Prostate gland (tissue), 2 donors: ENCODE measurements at regions of chr2 and their contacts with region 1.

Region 1: GRCh38 chr2:152466980-152467676 is 132.2 kb downstream of the FMNL2 start:
- DNase-seq: peak; percentile 66
- H3K4me3 ChIP-seq: no peak overlapping the region
- H3K27ac ChIP-seq: peak overlapping the region; percentile 21 to 66
- H3K4me1 ChIP-seq: peaks cover 7% of the 10 kb centered on the region
- H3K27me3 ChIP-seq: no peaks in the 10 kb centered on the region
- CTCF ChIP-seq: no peak
- POLR2A ChIP-seq: peak; percentile 14

Region 2: GRCh38 chr2:152383702-152384101 is 83.4 kb before region 1 on chr2:
- intact Hi-C with region 1: no loop called
- DNase-seq: no peak
- H3K4me3 ChIP-seq: no peak overlapping the region
- H3K27ac ChIP-seq: no peak overlapping the region
- H3K4me1 ChIP-seq: no peaks in the 10 kb centered on the region
- H3K27me3 ChIP-seq: no peaks in the 10 kb centered on the region
- CTCF ChIP-seq: no peak
- POLR2A ChIP-seq: no peak

Region 3: GRCh38 chr2:152395103-152395502 is 72.0 kb before region 1 on chr2:
- intact Hi-C with region 1: loop called (anchors 5 kb)
- DNase-seq: no peak
- H3K4me3 ChIP-seq: no peak overlapping the region
- H3K27ac ChIP-seq: peak overlapping the region in 1 of 2 donors; percentile 41
- H3K4me1 ChIP-seq: no peaks in the 10 kb centered on the region
- H3K27me3 ChIP-seq: no peaks in the 10 kb centered on the region
- CTCF ChIP-seq: no peak
- POLR2A ChIP-seq: no peak